Activated CD4-positive, alpha-beta T cell treated with anti-CD3 and anti-CD28 coated beads, Interleukin-2, amount 10 ng/mL, durations not matched to agents 7 days and 5 days (primary cell): ENCODE measurements at regions of chr17 and their contacts with region 1.

Region 1: DNA sequence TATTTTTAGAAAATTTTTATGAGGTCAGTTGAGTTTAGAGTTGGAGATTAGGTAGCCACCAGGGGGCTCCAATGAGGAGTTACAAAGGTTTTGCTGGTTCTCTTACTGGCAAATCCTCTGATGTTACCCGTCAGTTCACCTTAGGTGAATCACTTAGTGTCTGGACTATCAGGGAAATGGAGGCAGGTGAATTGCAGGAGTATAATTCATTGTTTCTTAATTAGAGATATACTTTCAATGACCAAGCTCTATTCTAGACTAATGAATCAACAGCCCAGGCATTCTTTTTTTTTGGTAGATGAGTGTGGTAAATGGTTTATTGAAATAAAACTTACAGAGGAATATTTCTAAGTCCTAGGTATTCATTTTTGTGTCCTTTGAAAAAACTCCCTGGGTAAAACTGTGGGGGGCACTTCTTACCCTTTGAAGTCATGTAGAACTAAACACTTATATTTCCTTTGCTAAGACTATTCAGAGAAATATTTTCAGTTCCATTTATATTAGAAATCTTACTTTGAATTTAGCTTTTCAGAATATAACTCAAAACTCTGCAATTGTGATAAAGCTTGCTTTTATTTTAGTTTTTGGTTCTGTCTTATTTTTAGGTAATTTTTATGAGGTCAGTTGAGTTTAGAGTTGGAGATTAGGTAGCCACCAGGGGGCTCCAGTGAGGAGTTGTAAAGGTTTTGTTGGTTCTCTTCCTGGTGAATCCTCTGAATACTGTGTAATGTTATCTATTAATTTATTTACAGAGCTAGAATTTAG is 17.7 kb downstream of the PSMD11 start:
- DNase-seq: peak; percentile 78
- H3K4me3 Mint-ChIP-seq: no peak overlapping the region
- H3K27ac Mint-ChIP-seq: no peak overlapping the region
- H3K4me1 Mint-ChIP-seq: peaks cover 29% of the 10 kb centered on the region
- H3K27me3 Mint-ChIP-seq: no peaks in the 10 kb centered on the region

Region 2: GRCh38 chr17:32152130-32152529 is 309.9 kb before region 1 on chr17:
- CTCF ChIA-PET with region 1: no interaction called
- POLR2A ChIA-PET with region 1: no interaction called
- DNase-seq: no peak
- H3K4me3 Mint-ChIP-seq: no peak overlapping the region
- H3K27ac Mint-ChIP-seq: no peak overlapping the region
- H3K4me1 Mint-ChIP-seq: peaks cover 13% of the 10 kb centered on the region
- H3K27me3 Mint-ChIP-seq: no peaks in the 10 kb centered on the region

Region 3: DNA sequence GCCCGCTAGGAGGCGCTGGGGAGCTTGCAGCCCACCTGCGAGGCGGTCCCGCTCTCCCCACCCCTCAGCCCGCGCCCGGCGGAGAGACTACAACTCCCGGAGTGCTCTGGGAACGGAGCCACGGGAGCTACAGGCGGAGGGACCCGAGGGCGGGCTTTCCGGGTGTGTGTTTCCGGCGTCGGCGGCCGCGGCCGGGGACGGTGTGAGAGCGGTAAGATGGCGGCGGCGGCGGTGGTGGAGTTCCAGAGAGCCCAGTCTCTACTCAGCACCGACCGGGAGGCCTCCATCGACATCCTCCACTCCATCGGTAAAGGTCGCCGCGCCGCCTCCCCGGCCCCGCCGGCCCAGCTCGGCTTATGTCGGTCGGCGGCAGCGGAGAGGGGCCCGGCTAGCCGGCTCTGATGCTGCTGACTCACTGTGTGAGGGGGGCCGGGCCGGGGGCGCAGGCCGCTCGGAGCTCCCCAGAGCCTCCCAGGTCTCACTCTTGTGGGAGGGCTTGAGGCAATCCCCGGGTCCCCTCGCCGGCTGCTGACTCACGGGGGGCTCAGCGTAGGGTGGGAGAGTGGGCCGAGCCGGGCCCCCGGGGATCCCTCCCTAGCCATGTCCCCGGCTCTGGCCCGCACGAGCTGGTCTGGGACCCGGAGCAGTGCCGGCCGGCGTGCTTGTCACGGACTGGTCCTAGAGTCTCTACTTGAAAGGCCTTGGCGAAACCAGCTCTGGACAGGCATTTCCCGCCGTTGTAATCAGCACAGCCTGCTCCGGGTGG is 17.5 kb before region 1 on chr17 and contains the start of gene PSMD11:
- CTCF ChIA-PET with region 1: interaction called, 29 read pairs
- POLR2A ChIA-PET with region 1: no interaction called
- DNase-seq: peak; percentile 99
- H3K4me3 Mint-ChIP-seq: peak within 1 kb of the TSS; percentile 90
- H3K27ac Mint-ChIP-seq: peak within 1 kb of the TSS; percentile 83
- H3K4me1 Mint-ChIP-seq: peaks cover 39% of the 10 kb centered on the region
- H3K27me3 Mint-ChIP-seq: peaks cover 14% of the 10 kb centered on the region
- total RNA-seq, gene PSMD11: 78.8 to 90.7 TPM

Region 4: DNA sequence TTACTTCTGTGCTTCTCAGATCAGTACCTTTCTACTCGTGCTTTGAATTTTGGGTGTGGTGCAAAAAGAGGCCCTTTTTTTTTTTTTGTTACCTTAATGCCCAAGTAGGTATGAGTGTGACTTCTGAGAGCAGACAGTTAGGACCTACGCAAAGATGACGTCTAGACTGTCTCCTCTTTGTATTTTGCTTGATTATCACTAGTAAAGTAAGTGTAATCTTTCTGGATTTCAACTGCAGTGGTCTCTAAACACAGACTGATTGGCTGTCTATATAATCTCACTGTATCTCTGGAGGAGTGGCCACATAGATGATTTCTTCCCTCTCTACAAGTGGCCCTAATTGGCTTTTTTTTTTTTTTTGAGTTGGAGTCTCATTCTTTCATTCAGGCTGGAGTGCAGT is 13.2 kb after region 1 on chr17:
- CTCF ChIA-PET with region 1: interaction called, 16 read pairs
- POLR2A ChIA-PET with region 1: interaction called, 3 read pairs
- DNase-seq: no peak
- H3K4me3 Mint-ChIP-seq: no peak overlapping the region
- H3K27ac Mint-ChIP-seq: no peak overlapping the region
- H3K4me1 Mint-ChIP-seq: no peaks in the 10 kb centered on the region
- H3K27me3 Mint-ChIP-seq: no peaks in the 10 kb centered on the region

Region 5: GRCh38 chr17:32486111-32486700 is 24.2 kb after region 1 on chr17:
- CTCF ChIA-PET with region 1: interaction called, 13 read pairs
- POLR2A ChIA-PET with region 1: interaction called, 3 read pairs
- DNase-seq: peak; percentile 67
- H3K4me3 Mint-ChIP-seq: peak overlapping the region; percentile 69
- H3K27ac Mint-ChIP-seq: peak overlapping the region; percentile 81
- H3K4me1 Mint-ChIP-seq: peaks cover 41% of the 10 kb centered on the region
- H3K27me3 Mint-ChIP-seq: no peaks in the 10 kb centered on the region

Region 6: DNA sequence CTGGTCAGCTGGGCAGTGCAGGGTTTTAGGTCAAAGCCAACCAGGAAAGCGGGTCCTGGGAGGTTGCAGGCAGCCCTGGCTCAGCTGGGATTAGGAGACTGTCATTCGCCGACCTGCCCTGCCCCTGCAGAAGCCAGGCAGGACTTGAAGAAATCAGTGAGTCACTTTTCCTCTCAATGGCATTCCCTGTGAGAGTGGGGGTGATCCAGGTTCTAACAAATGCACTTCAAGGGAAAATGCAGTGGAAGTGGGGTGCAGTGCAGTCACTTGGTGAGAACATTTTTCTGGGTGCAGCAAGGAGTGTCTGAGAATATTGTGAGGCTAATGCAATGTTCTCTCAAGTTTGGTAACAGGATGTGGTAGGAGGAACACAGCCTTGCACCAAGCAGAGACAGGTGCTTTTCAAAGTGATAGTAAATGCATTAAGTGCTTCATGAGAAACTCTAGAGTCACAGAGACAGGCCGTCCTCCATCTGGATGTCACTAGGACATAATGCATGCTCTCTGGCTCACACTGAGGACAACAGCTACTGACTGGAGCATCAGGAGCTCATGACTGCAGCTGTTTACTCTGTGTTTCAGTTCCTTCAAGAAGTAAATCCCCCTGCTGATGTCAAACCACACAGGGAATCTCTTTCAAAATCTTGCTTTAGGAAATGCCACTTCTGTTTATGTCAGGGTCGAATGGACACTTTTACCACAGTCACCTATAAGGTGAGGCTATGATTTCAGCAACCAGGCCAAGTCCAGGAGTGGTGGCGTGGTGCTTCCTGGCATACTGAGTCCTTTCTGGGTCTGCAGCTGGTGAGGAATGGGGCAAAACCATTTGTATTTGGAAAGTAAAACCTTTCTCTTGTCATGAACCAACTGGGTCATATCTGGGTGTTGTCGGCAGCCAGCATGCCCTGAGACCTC is 41.5 kb after region 1 on chr17:
- CTCF ChIA-PET with region 1: no interaction called
- POLR2A ChIA-PET with region 1: no interaction called
- DNase-seq: peak; percentile 72
- H3K4me3 Mint-ChIP-seq: peak overlapping the region; percentile 58
- H3K27ac Mint-ChIP-seq: peak overlapping the region; percentile 99
- H3K4me1 Mint-ChIP-seq: peaks cover 49% of the 10 kb centered on the region
- H3K27me3 Mint-ChIP-seq: no peaks in the 10 kb centered on the region